Activated CD4-positive, alpha-beta T cell treated with anti-CD3 and anti-CD28 coated beads for 36 hours (primary cell): ENCODE measurements at regions of chr16 and their contacts with region 1.

Region 1: GRCh38 chr16:11715246-11715947 is 27.3 kb downstream of the TXNDC11 start:
- DNase-seq: no peak
- ATAC-seq: no peak
- H3K4me3 Mint-ChIP-seq: no peak overlapping the region
- H3K27ac Mint-ChIP-seq: no peak overlapping the region
- H3K4me1 Mint-ChIP-seq: peaks cover 6% of the 10 kb centered on the region
- H3K27me3 Mint-ChIP-seq: no peaks in the 10 kb centered on the region

Region 2: GRCh38 chr16:10957771-10958486 is 757.5 kb before region 1 on chr16:
- CTCF ChIA-PET with region 1: interaction called, 3 read pairs
- POLR2A ChIA-PET with region 1: no interaction called
- intact Hi-C with region 1: loop called (anchors 5 to 10 kb)
- DNase-seq: peak; percentile 51
- ATAC-seq: peak; percentile 82
- H3K4me3 Mint-ChIP-seq: no peak overlapping the region
- H3K27ac Mint-ChIP-seq: peak overlapping the region; percentile 88
- H3K4me1 Mint-ChIP-seq: peaks cover 68% of the 10 kb centered on the region
- H3K27me3 Mint-ChIP-seq: no peaks in the 10 kb centered on the region

Region 3: GRCh38 chr16:11530171-11530940 is 185.0 kb before region 1 on chr16:
- CTCF ChIA-PET with region 1: interaction called, 25 read pairs
- POLR2A ChIA-PET with region 1: no interaction called
- intact Hi-C with region 1: loop called (anchors 1 kb)
- DNase-seq: no peak
- ATAC-seq: no peak
- H3K4me3 Mint-ChIP-seq: no peak overlapping the region
- H3K27ac Mint-ChIP-seq: no peak overlapping the region
- H3K4me1 Mint-ChIP-seq: peaks cover 3% of the 10 kb centered on the region
- H3K27me3 Mint-ChIP-seq: peaks cover 2% of the 10 kb centered on the region

Region 4: GRCh38 chr16:11689031-11689761 is 26.2 kb before region 1 on chr16:
- CTCF ChIA-PET with region 1: interaction called, 10 read pairs
- POLR2A ChIA-PET with region 1: no interaction called
- intact Hi-C with region 1: no loop called
- DNase-seq: no peak
- ATAC-seq: peak; percentile 64
- H3K4me3 Mint-ChIP-seq: no peak overlapping the region
- H3K27ac Mint-ChIP-seq: peak overlapping the region; percentile 27
- H3K4me1 Mint-ChIP-seq: peaks cover 17% of the 10 kb centered on the region
- H3K27me3 Mint-ChIP-seq: no peaks in the 10 kb centered on the region